PC-9 (cell line): ENCODE measurements at regions of chrX and their contacts with region 1.

Region 1: DNA sequence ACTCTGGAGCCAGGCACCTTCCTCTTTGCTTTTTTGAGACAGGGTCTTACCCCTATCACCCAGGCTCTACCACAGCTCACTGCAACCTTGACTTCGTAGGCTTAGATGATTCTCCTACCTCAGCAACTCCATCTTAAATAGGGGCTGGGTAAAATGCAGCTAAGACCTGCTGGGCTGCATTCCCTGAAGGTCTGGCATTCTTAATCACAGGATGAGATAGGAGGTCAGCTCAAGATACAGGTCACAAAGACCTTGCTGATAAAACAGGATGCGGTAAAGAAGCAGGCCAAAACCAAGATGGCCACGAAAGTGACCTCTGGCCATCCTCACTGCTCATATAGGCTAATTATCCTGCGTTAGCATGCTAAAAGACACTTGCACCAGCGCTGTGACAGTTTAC is 770.8 kb upstream of the PRKX start:
- DNase-seq: peak; percentile 33 to 67
- H3K4me3 ChIP-seq: no peak overlapping the region
- H3K27ac ChIP-seq: no peak overlapping the region; the same call in 1 of the 2 replicates
- H3K4me1 ChIP-seq: peaks cover 14% of the 10 kb centered on the region
- H3K27me3 ChIP-seq: no peaks in the 10 kb centered on the region
- CTCF ChIP-seq: no peak

Region 2: GRCh38 chrX:4315891-4316290 is 168.4 kb before region 1 on chrX:
- CTCF ChIA-PET with region 1: no interaction called
- POLR2A ChIA-PET with region 1: no interaction called
- intact Hi-C with region 1: loop called (anchors 5 kb)
- DNase-seq: peak; percentile 34 to 88
- H3K4me3 ChIP-seq: no peak overlapping the region
- H3K27ac ChIP-seq: peak overlapping the region; percentile 85
- H3K4me1 ChIP-seq: peaks cover 30% of the 10 kb centered on the region
- H3K27me3 ChIP-seq: no peaks in the 10 kb centered on the region
- CTCF ChIP-seq: no peak

Region 3: GRCh38 chrX:4379066-4379465 is 105.2 kb before region 1 on chrX:
- CTCF ChIA-PET with region 1: no interaction called
- POLR2A ChIA-PET with region 1: no interaction called
- intact Hi-C with region 1: loop called (anchors 5 kb)
- DNase-seq: peak; percentile 64 to 90
- H3K4me3 ChIP-seq: no peak overlapping the region; the same call in 1 of the 2 replicates
- H3K27ac ChIP-seq: peak overlapping the region; percentile 88
- H3K4me1 ChIP-seq: peaks cover 30% of the 10 kb centered on the region
- H3K27me3 ChIP-seq: no peaks in the 10 kb centered on the region
- CTCF ChIP-seq: no peak